ENCODE measurements at regions of chr3 and their contacts with region 1.

Region 1: DNA sequence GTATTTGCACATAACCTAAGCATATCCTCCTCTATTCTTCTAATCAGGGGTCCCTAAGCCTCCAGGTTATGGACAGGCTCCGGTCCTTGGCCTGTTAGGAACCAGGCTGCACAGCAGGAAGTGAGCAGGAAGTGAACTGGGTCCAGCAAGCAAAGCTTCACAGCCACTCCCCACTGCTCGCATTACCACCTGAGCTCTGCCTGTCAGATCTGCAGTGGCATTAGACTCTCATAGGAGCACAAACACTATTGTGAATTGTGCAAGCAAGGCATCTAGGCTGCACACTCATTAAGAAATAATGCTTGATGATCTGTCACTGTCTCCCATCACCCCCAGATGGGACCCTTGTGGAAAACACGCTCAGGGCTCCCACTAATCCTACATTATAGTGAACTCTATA is 9.8 kb downstream of the MSL2 start:
- DNase-seq: peak; percentile 68
- H3K4me3 Mint-ChIP-seq: no peak overlapping the region
- H3K27ac Mint-ChIP-seq: peak overlapping the region; percentile 48
- H3K4me1 Mint-ChIP-seq: peaks cover 74% of the 10 kb centered on the region
- H3K27me3 Mint-ChIP-seq: no peaks in the 10 kb centered on the region
- CTCF ChIP-seq: no peak

Region 2: GRCh38 chr3:136149667-136150066 is 36.7 kb before region 1 on chr3:
- CTCF ChIA-PET with region 1: interaction called, 3 read pairs
- intact Hi-C with region 1: loop called (anchors 2 kb)
- DNase-seq: no peak
- H3K4me3 Mint-ChIP-seq: no peak overlapping the region
- H3K27ac Mint-ChIP-seq: peak overlapping the region; percentile 37
- H3K4me1 Mint-ChIP-seq: peaks cover 35% of the 10 kb centered on the region
- H3K27me3 Mint-ChIP-seq: no peaks in the 10 kb centered on the region
- CTCF ChIP-seq: no peak

Region 3: GRCh38 chr3:136624894-136625815 is 438.8 kb after region 1 on chr3:
- CTCF ChIA-PET with region 1: no interaction called
- intact Hi-C with region 1: loop called (anchors 10 kb)
- DNase-seq: peak; percentile 84
- H3K4me3 Mint-ChIP-seq: peak overlapping the region; percentile 66
- H3K27ac Mint-ChIP-seq: peak overlapping the region; percentile 97
- H3K4me1 Mint-ChIP-seq: peaks cover 71% of the 10 kb centered on the region
- H3K27me3 Mint-ChIP-seq: no peaks in the 10 kb centered on the region
- CTCF ChIP-seq: no peak